Transverse colon (tissue), 4 donors: ENCODE measurements at regions of chr15 and their contacts with region 1.

Region 1: DNA sequence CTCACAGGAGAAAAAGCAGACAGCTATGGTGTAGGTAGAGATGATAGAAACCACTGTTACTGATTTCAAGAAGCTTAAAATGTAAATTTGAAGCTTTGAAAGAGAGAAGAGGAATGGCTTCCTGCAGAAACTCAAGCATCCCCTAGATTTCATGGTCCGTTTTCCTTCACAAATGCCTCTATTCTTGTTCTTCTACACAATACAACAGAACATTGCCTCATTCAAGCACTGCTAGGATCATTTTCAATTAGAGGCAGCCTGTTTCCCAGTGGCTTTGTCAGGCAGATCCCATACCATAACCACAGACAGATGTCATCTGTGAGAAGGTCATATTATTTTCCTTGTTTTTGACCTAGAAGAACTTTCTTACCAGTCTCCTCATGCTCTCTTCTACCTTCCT is 77.9 kb upstream of the SPRED1 start:
- DNase-seq: no peak
- H3K4me3 ChIP-seq: no peak overlapping the region
- H3K27ac ChIP-seq: no peak overlapping the region
- H3K4me1 ChIP-seq: no peaks in the 10 kb centered on the region
- H3K27me3 ChIP-seq: no peaks in the 10 kb centered on the region
- CTCF ChIP-seq: no peak
- EP300 ChIP-seq: no peak
- POLR2A ChIP-seq: no peak

Region 2: GRCh38 chr15:38226608-38227266 is 52.0 kb after region 1 on chr15:
- in situ Hi-C with region 1: loop called in 1 of 4 experiments (anchors 5 kb)
- intact Hi-C with region 1: no loop called
- DNase-seq: peak; percentile 71
- H3K4me3 ChIP-seq: no peak overlapping the region
- H3K27ac ChIP-seq: peak overlapping the region; percentile 14 to 48 (median 34)
- H3K4me1 ChIP-seq: peaks cover 0 to 22% (median 3%) of the 10 kb centered on the region in 4 donors
- H3K27me3 ChIP-seq: no peaks in the 10 kb centered on the region
- CTCF ChIP-seq: no peak
- EP300 ChIP-seq: no peak
- POLR2A ChIP-seq: no peak

Region 3: GRCh38 chr15:38242055-38242454 is 67.4 kb after region 1 on chr15:
- in situ Hi-C with region 1: no loop called
- intact Hi-C with region 1: no loop called
- DNase-seq: no peak
- H3K4me3 ChIP-seq: no peak overlapping the region
- H3K27ac ChIP-seq: no peak overlapping the region
- H3K4me1 ChIP-seq: peaks cover 0 to 21% (median 2%) of the 10 kb centered on the region in 4 donors
- H3K27me3 ChIP-seq: no peaks in the 10 kb centered on the region
- CTCF ChIP-seq: no peak
- EP300 ChIP-seq: no peak
- POLR2A ChIP-seq: no peak

Region 4: GRCh38 chr15:40150163-40150925 is 1975.7 kb after region 1 on chr15:
- in situ Hi-C with region 1: no loop called
- intact Hi-C with region 1: no loop called
- DNase-seq: peak; percentile 15
- H3K4me3 ChIP-seq: no peak overlapping the region
- H3K27ac ChIP-seq: no peak overlapping the region
- H3K4me1 ChIP-seq: peaks cover 0 to 2% (median under 1%) of the 10 kb centered on the region in 4 donors
- H3K27me3 ChIP-seq: no peaks in the 10 kb centered on the region
- CTCF ChIP-seq: no peak
- EP300 ChIP-seq: no peak
- POLR2A ChIP-seq: no peak